Ascending aorta (tissue), 2 donors: ENCODE measurements at regions of chr1 and their contacts with region 1.

Region 1: DNA sequence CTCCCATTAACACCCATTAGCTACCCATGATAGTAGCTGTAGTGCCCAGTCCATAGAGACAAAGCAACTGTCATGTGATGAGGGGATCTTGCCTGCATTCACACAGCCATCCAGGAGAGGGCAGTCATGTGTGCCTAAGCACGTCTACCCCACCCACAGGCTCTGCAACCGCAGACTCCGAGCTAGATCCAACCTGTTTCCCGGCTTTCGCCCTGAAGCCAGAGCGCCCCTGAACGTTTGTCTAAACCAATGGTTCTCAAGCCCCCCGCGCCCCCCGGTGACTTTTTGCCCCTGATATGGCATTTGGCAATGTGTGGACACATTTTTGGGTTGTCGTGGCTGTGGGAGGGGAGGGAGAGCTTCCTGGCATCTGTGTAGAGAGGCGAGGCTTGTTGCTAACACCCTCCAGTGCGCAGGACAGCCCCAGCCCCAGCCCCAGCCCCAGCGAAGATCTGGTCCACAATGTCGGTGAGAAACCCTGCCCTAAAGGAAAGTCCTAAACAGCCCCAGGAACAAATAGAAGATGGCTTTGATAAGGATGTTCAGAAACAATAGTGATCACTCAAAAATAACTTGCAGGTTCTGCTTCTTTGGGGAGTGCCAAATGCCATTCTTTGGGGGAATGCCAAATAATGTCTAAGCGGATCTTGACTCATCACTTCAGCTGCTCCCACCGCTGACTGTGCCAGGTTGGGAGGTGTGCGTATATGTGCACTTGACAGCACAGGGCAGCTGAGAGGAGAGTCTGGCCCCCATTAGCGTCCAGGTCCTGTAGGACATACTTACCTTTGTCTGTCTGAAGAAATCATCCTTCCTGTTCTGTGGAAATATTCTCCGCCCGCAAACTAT is 34.5 kb downstream of the SLC44A3 start:
- DNase-seq: peak; percentile 67 to 96
- H3K4me3 ChIP-seq: peak overlapping the region; percentile 46 to 61
- H3K27ac ChIP-seq: peak overlapping the region; percentile 68 to 73
- H3K4me1 ChIP-seq: peaks cover 0 to 16% of the 10 kb centered on the region in 2 donors
- H3K27me3 ChIP-seq: no peaks in the 10 kb centered on the region
- CTCF ChIP-seq: peak; percentile 93

Region 2: DNA sequence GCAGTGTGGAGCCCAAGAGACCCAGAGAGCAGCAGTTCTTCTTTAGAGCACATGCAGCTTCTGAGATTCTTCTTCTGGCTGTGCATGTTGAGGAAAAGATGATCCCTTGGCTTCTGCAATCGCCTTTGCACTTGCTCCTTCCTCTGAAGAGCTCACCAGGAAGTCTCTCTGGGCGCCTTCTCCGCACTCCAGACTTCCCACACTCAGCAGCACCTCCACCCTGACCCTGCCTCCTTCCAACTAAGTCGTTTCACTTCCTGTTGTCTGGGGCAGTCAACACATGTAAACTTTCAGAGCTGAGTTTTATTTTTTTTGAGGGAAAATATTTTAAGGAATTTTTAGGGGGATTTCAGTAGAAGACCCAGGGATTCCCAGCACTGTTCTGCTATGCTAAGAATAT is 239.7 kb before region 1 on chr1:
- intact Hi-C with region 1: no loop called
- DNase-seq: peak in 1 of 2 donors; percentile 54
- H3K4me3 ChIP-seq: no peak overlapping the region
- H3K27ac ChIP-seq: no peak overlapping the region
- H3K4me1 ChIP-seq: no peaks in the 10 kb centered on the region
- H3K27me3 ChIP-seq: no peaks in the 10 kb centered on the region
- CTCF ChIP-seq: no peak

Region 3: GRCh38 chr1:94746635-94747525 is 107.8 kb before region 1 on chr1:
- intact Hi-C with region 1: no loop called
- DNase-seq: no peak
- H3K4me3 ChIP-seq: no peak overlapping the region
- H3K27ac ChIP-seq: no peak overlapping the region
- H3K4me1 ChIP-seq: no peaks in the 10 kb centered on the region
- H3K27me3 ChIP-seq: no peaks in the 10 kb centered on the region
- CTCF ChIP-seq: no peak

Region 4: GRCh38 chr1:94819941-94820746 is 34.5 kb before region 1 on chr1 and contains the start of gene SLC44A3:
- intact Hi-C with region 1: loop called (anchors 5 kb)
- DNase-seq: peak in 1 of 2 donors; percentile 68
- H3K4me3 ChIP-seq: peak within 1 kb of the TSS; percentile 74 to 92
- H3K27ac ChIP-seq: no peak within 1 kb of the TSS
- H3K4me1 ChIP-seq: peaks cover 0 to 5% of the 10 kb centered on the region in 2 donors
- H3K27me3 ChIP-seq: no peaks in the 10 kb centered on the region
- CTCF ChIP-seq: peak in 2 of 3 experiments; percentile 12 to 46
- total RNA-seq, gene SLC44A3: not detected

Region 5: GRCh38 chr1:94909486-94909885 is 54.8 kb after region 1 on chr1:
- intact Hi-C with region 1: loop called (anchors 5 kb)
- DNase-seq: no peak
- H3K4me3 ChIP-seq: no peak overlapping the region
- H3K27ac ChIP-seq: no peak overlapping the region
- H3K4me1 ChIP-seq: peaks cover 4 to 56% of the 10 kb centered on the region in 2 donors
- H3K27me3 ChIP-seq: no peaks in the 10 kb centered on the region
- CTCF ChIP-seq: no peak